IMR-90 (cell line): ENCODE measurements at regions of chr6 and their contacts with region 1.

Region 1: DNA sequence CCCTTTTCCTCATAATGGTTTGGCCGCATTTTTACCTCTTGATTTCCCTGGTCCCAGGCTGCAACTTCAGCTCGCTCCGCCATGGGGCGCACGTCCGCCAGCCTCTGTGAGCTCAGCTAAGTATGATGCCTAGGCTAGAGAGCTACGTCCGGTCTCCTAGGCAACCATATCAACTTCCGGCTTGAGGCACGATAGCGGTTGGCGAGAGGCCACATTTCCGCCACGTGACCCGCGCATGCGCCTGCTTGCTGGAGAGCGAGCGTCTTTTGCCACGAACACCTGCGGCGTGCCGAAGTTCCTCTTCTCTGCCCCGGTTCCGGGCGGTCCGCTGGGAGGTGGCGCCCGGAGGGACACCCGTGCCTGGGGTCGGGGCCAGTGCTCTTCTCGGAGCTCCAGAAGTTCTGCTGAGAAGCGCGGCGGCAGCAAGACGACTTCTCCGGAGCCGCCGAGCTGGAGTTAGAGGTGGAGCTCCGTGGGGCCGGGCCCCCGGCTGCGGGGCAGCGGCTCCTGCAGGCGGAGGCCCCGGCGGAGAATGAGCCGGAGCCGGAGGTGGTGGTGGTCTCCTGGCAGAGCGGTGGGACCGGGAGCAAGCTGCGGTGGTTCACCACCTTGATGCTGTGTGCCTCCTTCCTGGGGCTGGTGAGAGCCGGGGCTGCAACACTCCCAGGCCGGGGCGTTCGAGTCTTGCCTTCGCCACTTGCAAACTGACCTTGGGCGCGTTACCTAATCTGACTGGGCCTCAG is 172.0 kb downstream of the SLC16A10 start:
- DNase-seq: peak; percentile 99
- ATAC-seq: peak; percentile 98
- H3K4me3 ChIP-seq: peak overlapping the region; percentile 62
- H3K27ac ChIP-seq: peak overlapping the region; percentile 56
- H3K4me1 ChIP-seq: peaks cover 10% of the 10 kb centered on the region
- H3K27me3 ChIP-seq: no peaks in the 10 kb centered on the region
- CTCF ChIP-seq: peak; percentile 98
- POLR2A ChIP-seq: peak; percentile 85
- RAD21 ChIP-seq: peak; percentile 85

Region 2: DNA sequence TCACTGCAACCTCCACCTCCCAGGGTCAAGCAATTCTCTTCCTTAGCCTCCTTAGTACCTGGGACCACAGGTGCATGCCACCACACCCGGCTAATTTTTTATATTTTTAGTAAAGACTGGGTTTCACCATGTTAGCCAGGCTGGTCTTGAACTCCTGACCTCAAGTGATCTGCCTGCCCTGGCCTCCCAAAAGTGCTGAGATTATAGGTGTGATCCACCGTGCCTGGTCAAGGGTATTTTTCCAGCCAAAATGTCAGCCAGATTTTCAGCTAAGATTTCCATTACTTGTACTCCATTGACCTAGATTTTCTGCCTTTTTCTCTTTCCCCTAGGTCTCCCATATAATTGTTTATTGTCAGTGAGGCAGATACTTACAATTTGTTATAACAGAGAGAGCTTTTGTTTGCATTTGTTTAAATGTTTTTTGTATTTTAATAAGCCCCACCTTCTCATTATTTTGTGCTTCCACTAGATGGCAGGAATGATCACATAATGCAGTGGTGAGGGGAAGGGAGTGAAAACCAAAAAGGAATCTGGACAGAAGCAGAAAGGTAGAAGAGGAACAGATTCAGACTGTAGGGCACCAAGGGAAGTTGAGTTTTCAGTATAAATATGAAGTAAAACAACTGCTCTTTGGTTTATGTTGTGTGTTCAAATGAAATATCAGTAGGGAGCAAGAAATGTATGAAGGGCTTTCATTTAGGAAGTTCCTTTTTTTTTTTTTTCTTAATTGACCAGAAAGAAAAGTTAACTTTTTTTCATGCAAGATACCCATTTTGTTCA is 247.7 kb before region 1 on chr6:
- CTCF ChIA-PET with region 1: interaction called, 4 read pairs
- POLR2A ChIA-PET with region 1: no interaction called
- dilution Hi-C with region 1: no loop called
- in situ Hi-C with region 1: no loop called
- intact Hi-C with region 1: loop called (anchors 5 kb)
- DNase-seq: peak; percentile 55
- ATAC-seq: peak; percentile 80
- H3K4me3 ChIP-seq: no peak overlapping the region
- H3K27ac ChIP-seq: no peak overlapping the region
- H3K4me1 ChIP-seq: no peaks in the 10 kb centered on the region; the same call in 1 of the 2 replicates
- H3K27me3 ChIP-seq: no peaks in the 10 kb centered on the region
- CTCF ChIP-seq: peak; percentile 70
- POLR2A ChIP-seq: no peak
- RAD21 ChIP-seq: peak; percentile 73

Region 3: GRCh38 chr6:111057074-111057752 is 202.0 kb before region 1 on chr6:
- CTCF ChIA-PET with region 1: no interaction called
- POLR2A ChIA-PET with region 1: no interaction called
- dilution Hi-C with region 1: no loop called
- in situ Hi-C with region 1: no loop called
- intact Hi-C with region 1: loop called (anchors 5 kb)
- DNase-seq: peak; percentile 52
- ATAC-seq: peak; percentile 94
- H3K4me3 ChIP-seq: no peak overlapping the region
- H3K27ac ChIP-seq: no peak overlapping the region
- H3K4me1 ChIP-seq: no peaks in the 10 kb centered on the region
- H3K27me3 ChIP-seq: peaks cover 18% of the 10 kb centered on the region
- CTCF ChIP-seq: peak; percentile 73
- POLR2A ChIP-seq: no peak
- RAD21 ChIP-seq: peak; percentile 57

Region 4: GRCh38 chr6:111462770-111463391 is 203.6 kb after region 1 on chr6:
- CTCF ChIA-PET with region 1: no interaction called
- POLR2A ChIA-PET with region 1: no interaction called
- dilution Hi-C with region 1: no loop called
- in situ Hi-C with region 1: loop called (anchors 10 kb)
- intact Hi-C with region 1: no loop called
- DNase-seq: peak; percentile 88
- ATAC-seq: peak; percentile 87
- H3K4me3 ChIP-seq: no peak overlapping the region
- H3K27ac ChIP-seq: no peak overlapping the region
- H3K4me1 ChIP-seq: peaks cover 6% of the 10 kb centered on the region
- H3K27me3 ChIP-seq: no peaks in the 10 kb centered on the region
- CTCF ChIP-seq: no peak
- POLR2A ChIP-seq: no peak
- RAD21 ChIP-seq: no peak

Region 5: GRCh38 chr6:111642463-111643158 is 383.4 kb after region 1 on chr6:
- CTCF ChIA-PET with region 1: interaction called, 3 read pairs
- POLR2A ChIA-PET with region 1: no interaction called
- dilution Hi-C with region 1: no loop called
- in situ Hi-C with region 1: no loop called
- intact Hi-C with region 1: loop called (anchors 2 kb)
- DNase-seq: peak; percentile 66
- ATAC-seq: peak; percentile 90
- H3K4me3 ChIP-seq: no peak overlapping the region
- H3K27ac ChIP-seq: no peak overlapping the region
- H3K4me1 ChIP-seq: no peaks in the 10 kb centered on the region; the same call in none of the 2 replicates
- H3K27me3 ChIP-seq: no peaks in the 10 kb centered on the region
- CTCF ChIP-seq: peak; percentile 79
- POLR2A ChIP-seq: no peak
- RAD21 ChIP-seq: peak; percentile 90